Heart left ventricle (tissue), 16 donors: ENCODE measurements at regions of chr7 and their contacts with region 1.

Region 1: DNA sequence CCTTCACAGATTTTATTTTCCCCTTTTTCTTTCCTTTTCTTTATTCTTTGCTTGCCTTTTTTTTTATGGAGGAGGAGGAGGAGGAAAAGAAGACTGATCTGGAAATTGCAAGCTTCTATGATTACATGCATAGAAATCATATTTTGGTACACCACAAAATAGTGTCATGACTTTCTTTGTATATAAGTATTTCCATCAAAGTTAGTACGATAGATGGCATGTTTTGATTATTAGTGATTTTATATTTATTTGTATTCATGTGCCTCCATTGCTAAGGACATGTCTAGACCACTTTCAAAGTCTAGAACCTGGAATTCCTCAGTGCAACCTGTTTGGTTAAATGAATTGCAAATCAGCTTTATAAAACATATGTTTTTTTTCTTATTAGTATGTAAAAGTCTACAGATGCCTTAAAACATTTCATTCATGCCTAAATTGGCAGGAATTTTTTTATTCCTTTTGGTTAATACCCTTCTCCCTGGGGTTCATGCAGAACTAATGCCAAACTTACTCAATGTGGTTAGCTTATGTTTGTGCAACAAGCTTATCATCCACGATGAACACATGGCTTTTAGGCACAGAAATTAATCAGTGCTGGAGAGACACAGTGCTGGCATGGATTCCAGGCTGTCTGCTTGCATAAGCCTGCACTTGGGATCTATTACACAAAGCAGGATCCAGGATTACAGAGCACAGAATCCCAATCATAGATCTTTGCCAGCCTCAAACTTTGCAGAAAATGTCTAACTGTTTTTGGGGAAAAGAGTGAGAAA is 213.1 kb downstream of the CHRM2 start:
- DNase-seq: peak in 4 of 5 donors; percentile 77 to 88 (median 82)
- ATAC-seq: peak; percentile 92 to 96 (median 96)
- H3K4me3 ChIP-seq: no peak overlapping the region
- H3K27ac ChIP-seq: peak overlapping the region; percentile 16 to 89 (median 64)
- H3K4me1 ChIP-seq: peaks cover 0 to 42% (median 15%) of the 10 kb centered on the region in 12 donors
- H3K27me3 ChIP-seq: no peaks in the 10 kb centered on the region
- CTCF ChIP-seq: no peak
- POLR2A ChIP-seq: no peak

Region 2: GRCh38 chr7:136868496-136869000 is 213.0 kb before region 1 on chr7 and contains the start of gene CHRM2:
- intact Hi-C with region 1: loop called in 7 of 10 experiments (anchors 2 to 10 kb)
- DNase-seq: peak; percentile 22 to 48 (median 35)
- ATAC-seq: peak; percentile 50 to 57 (median 56)
- H3K4me3 ChIP-seq: peak within 1 kb of the TSS; percentile 21 to 81 (median 62)
- H3K27ac ChIP-seq: peak within 1 kb of the TSS; percentile 55 to 93 (median 83)
- H3K4me1 ChIP-seq: peaks cover 0 to 19% (median 4%) of the 10 kb centered on the region in 12 donors
- H3K27me3 ChIP-seq: peaks cover 0 to 40% (median 3%) of the 10 kb centered on the region in 9 donors
- CTCF ChIP-seq: no peak
- POLR2A ChIP-seq: no peak
- total RNA-seq, gene CHRM2: 25.3 to 124 (median 78.5) TPM

Region 3: DNA sequence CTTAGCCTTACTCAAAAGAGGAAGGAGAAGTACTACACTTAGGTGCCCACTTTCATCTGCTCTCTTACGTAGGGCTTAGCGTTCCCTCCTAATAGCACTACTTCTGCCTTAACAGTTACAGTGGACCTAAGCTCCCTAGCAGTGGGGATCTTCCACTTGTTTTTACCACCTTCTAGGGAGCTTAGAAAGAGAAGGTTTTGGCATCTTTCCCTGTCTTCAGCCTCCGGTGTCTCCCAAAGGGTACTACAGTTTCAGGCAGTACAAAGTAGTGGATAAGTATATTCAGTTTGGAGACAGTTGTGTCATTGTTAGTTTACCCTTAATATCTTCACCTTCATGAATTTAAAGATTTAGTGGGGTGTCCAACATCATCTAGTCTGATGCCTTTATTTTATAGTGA is 198.5 kb before region 1 on chr7:
- intact Hi-C with region 1: loop called in 5 of 10 experiments (anchors 5 to 10 kb)
- DNase-seq: no peak
- ATAC-seq: peak in 2 of 4 donors; percentile 13 to 40
- H3K4me3 ChIP-seq: no peak overlapping the region
- H3K27ac ChIP-seq: peak overlapping the region in 9 of 12 donors; percentile 46 to 89 (median 70)
- H3K4me1 ChIP-seq: peaks cover 0 to 45% (median 3%) of the 10 kb centered on the region in 12 donors
- H3K27me3 ChIP-seq: no peaks in the 10 kb centered on the region
- CTCF ChIP-seq: no peak
- POLR2A ChIP-seq: no peak

Region 4: DNA sequence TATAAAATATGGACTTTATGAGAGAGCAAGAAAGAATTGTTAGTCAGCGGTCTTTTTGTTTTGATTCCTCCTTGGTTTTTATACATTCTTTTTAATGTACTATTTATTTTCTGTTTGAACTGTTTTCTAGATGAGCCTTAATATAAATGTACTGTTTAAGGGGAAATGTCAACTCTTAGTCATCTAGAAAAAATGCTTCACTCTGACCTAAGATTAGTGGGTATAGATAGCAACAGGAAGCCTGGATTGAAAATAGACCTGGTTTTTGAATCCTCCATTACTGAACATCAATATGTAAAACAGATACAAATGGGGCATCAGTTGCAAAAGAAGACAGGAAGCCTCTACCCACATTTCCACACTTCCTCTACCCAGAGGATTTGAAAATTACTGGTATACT is 125.3 kb before region 1 on chr7:
- intact Hi-C with region 1: loop called in 2 of 10 experiments (anchors 5 to 10 kb)
- DNase-seq: no peak
- ATAC-seq: no peak
- H3K4me3 ChIP-seq: no peak overlapping the region
- H3K27ac ChIP-seq: peak overlapping the region in 5 of 12 donors; percentile 5 to 44 (median 19)
- H3K4me1 ChIP-seq: peaks cover 0 to 21% (median 5%) of the 10 kb centered on the region in 12 donors
- H3K27me3 ChIP-seq: no peaks in the 10 kb centered on the region
- CTCF ChIP-seq: no peak
- POLR2A ChIP-seq: no peak

Region 5: DNA sequence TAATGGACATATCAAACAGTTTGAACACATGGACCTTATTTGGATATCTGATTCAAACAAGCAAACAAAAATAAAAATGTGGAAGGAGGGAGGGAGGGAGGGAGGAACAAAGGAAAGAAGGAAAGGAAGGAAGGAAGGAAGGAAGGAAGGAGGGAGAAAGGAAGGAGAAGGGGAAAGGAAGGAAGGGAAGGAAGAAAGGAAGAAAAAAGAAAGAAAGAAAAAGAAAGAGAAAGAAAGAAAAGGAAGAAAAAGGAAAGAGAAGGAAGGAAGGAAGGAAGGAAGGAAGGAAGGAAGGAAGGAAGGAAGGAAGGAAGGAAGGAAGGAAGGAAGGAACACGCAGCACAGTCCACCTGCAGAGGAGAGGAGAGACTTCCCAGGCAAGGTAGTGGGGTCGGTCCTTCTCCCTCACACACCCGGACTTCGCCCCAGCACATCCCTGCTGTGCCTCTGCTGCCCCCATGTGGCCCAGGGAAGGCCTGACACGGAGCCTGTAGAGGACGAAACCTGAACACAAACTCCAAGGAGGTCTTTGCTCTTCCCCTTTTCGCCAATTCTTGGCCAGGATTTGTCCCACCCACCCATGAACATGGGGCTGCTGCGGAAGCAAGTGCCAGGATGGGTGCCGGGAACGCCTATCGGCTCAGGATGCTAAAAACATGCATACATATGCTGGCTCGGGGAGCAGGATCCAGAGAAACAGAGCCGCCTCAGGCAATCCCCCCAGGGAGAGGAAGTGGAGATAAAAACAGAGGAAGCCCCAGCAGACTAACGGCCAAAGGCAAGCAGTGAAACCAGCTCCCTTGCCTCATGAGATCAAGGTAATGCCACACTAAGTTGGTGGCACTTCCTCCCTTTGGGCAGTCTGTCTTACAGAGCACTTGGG is 817.6 kb after region 1 on chr7:
- intact Hi-C with region 1: no loop called
- DNase-seq: peak; percentile 79 to 89 (median 84)
- ATAC-seq: peak; percentile 92 to 95 (median 95)
- H3K4me3 ChIP-seq: peak overlapping the region in 5 of 12 donors; percentile 12 to 30 (median 26)
- H3K27ac ChIP-seq: peak overlapping the region in 10 of 12 donors; percentile 21 to 72 (median 50)
- H3K4me1 ChIP-seq: peaks cover 0 to 35% (median 20%) of the 10 kb centered on the region in 12 donors
- H3K27me3 ChIP-seq: no peaks in the 10 kb centered on the region
- CTCF ChIP-seq: peak; percentile 90 to 97 (median 95)
- POLR2A ChIP-seq: no peak